Left lung (tissue), 14 donors: ENCODE measurements at regions of chr1 and their contacts with region 1.

Region 1: DNA sequence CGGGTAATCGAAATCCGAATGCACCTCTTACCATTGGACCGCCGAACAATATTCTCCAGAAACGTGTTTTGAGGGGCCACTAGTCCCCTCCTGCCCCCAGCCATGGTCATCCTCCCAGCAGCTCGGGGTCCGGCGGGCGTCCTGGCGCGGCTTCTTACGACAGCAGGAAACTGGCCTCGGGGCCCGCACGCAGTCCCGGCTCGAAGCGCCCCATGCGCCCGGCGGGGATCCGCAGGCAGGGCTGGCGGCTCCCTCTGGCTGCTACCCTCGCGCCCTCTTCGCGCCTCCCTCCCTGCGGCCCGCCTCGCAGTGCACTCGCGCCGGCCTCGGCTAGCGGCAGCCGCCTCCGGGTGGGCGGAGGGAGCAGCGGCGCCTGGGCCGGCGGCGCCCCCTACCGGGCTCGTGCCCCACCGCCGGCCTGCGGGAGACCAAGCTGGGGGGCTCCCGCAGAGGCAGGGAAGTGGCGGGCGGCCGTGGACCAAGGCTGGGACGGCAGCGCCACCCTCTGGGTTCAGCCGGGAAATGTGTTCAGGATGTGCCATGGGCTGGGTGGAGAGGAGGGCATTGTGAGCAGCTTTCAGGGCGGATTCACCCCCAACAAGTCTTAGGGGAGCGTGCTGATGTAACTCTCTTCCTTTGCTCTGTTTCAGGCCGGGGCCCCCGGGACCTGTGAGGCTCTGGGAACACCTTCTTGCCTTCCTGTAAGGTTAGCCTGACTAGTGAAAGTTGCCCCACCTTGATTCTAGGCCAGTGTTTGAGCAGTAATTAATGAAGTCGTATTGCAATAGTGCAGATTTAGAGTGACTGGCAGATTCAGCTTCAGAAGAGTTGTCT is at the start of gene KCNH1:
- DNase-seq: peak; percentile 56 to 87 (median 74)
- ATAC-seq: peak; percentile 98
- H3K4me3 ChIP-seq: peak within 1 kb of the TSS; percentile 14 to 31
- H3K27ac ChIP-seq: no peak within 1 kb of the TSS
- H3K4me1 ChIP-seq: peaks cover 10 to 14% of the 10 kb centered on the region in 2 donors
- H3K27me3 ChIP-seq: peaks cover 34 to 92% of the 10 kb centered on the region in 2 donors
- CTCF ChIP-seq: peak; percentile 70 to 74
- polyA plus RNA-seq, gene KCNH1: 0.04 to 0.54 (median 0.20) TPM

Region 2: GRCh38 chr1:210400043-210400840 is 733.8 kb before region 1 on chr1:
- intact Hi-C with region 1: loop called in 1 of 2 experiments (anchors 10 kb)
- DNase-seq: peak in 1 of 4 donors; percentile 41
- ATAC-seq: peak; percentile 98
- H3K4me3 ChIP-seq: no peak overlapping the region
- H3K27ac ChIP-seq: no peak overlapping the region
- H3K4me1 ChIP-seq: no peaks in the 10 kb centered on the region
- H3K27me3 ChIP-seq: no peaks in the 10 kb centered on the region
- CTCF ChIP-seq: peak; percentile 80 to 81

Region 3: DNA sequence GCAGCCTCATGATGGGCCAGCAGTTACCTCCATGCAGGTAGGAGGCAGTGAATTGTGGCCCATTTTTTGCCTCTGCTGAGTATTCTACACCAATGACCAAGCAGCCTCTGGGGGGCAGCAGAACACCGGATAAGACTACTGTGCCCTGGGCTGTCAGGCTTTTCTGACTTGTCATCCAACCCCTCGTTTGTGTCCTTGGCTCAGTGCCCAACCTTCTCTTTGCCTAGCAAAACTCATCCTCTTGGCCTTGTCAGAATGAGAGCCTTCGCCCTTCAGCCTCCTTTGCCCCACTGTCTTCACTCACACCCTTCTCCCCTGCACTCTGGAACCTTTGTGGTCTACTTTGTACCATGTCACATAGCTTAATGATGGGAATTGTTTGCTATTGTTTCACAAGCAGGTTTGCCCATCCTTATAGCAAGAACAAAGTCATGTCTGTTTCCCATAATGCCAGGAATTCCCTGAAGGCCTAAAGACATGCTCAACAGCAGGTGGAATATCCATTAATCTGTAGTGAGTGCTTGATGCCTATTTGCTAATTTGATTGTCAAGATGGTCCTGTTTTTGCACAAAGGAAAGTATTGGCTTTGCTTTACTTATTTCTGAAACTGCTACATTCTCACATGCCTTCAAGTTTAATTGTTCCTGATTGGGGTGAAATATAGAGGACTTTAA is 549.5 kb before region 1 on chr1:
- intact Hi-C with region 1: loop called in 1 of 2 experiments (anchors 5 kb)
- DNase-seq: peak in 3 of 4 donors; percentile 55 to 69 (median 68)
- ATAC-seq: peak; percentile 90
- H3K4me3 ChIP-seq: no peak overlapping the region
- H3K27ac ChIP-seq: no peak overlapping the region
- H3K4me1 ChIP-seq: peaks cover 0 to 5% of the 10 kb centered on the region in 2 donors
- H3K27me3 ChIP-seq: no peaks in the 10 kb centered on the region
- CTCF ChIP-seq: peak; percentile 43 to 59